ENCODE measurements at regions of chr2 and their contacts with region 1.

Region 1: GRCh38 chr2:98731041-98731893 is at the start of gene MGAT4A:
- DNase-seq: peak; percentile 81
- H3K4me3 Mint-ChIP-seq: peak within 1 kb of the TSS; percentile 86
- H3K27ac Mint-ChIP-seq: peak within 1 kb of the TSS; percentile 86
- H3K4me1 Mint-ChIP-seq: peaks cover 71% of the 10 kb centered on the region
- H3K27me3 Mint-ChIP-seq: no peaks in the 10 kb centered on the region
- total RNA-seq, gene MGAT4A: 69.8 to 80.6 TPM

Region 2: GRCh38 chr2:98324181-98324580 is 407.1 kb before region 1 on chr2:
- CTCF ChIA-PET with region 1: no interaction called
- POLR2A ChIA-PET with region 1: no interaction called
- DNase-seq: no peak
- H3K4me3 Mint-ChIP-seq: no peak overlapping the region
- H3K27ac Mint-ChIP-seq: no peak overlapping the region
- H3K4me1 Mint-ChIP-seq: no peaks in the 10 kb centered on the region
- H3K27me3 Mint-ChIP-seq: peaks cover 17% of the 10 kb centered on the region

Region 3: GRCh38 chr2:98479959-98480524 is 251.2 kb before region 1 on chr2:
- CTCF ChIA-PET with region 1: no interaction called
- POLR2A ChIA-PET with region 1: no interaction called
- DNase-seq: peak; percentile 56
- H3K4me3 Mint-ChIP-seq: peak overlapping the region; percentile 18
- H3K27ac Mint-ChIP-seq: peak overlapping the region; percentile 95
- H3K4me1 Mint-ChIP-seq: peaks cover 100% of the 10 kb centered on the region
- H3K27me3 Mint-ChIP-seq: no peaks in the 10 kb centered on the region

Region 4: GRCh38 chr2:98586551-98587140 is 144.6 kb before region 1 on chr2:
- CTCF ChIA-PET with region 1: no interaction called
- POLR2A ChIA-PET with region 1: no interaction called
- DNase-seq: peak; percentile 6
- H3K4me3 Mint-ChIP-seq: no peak overlapping the region
- H3K27ac Mint-ChIP-seq: no peak overlapping the region
- H3K4me1 Mint-ChIP-seq: peaks cover 1% of the 10 kb centered on the region
- H3K27me3 Mint-ChIP-seq: no peaks in the 10 kb centered on the region

Region 5: GRCh38 chr2:98649135-98649991 is 81.9 kb before region 1 on chr2:
- CTCF ChIA-PET with region 1: interaction called, 17 read pairs
- POLR2A ChIA-PET with region 1: interaction called, 195 read pairs
- DNase-seq: peak; percentile 86
- H3K4me3 Mint-ChIP-seq: no peak overlapping the region
- H3K27ac Mint-ChIP-seq: peak overlapping the region; percentile 36
- H3K4me1 Mint-ChIP-seq: peaks cover 50% of the 10 kb centered on the region
- H3K27me3 Mint-ChIP-seq: no peaks in the 10 kb centered on the region

Region 6: DNA sequence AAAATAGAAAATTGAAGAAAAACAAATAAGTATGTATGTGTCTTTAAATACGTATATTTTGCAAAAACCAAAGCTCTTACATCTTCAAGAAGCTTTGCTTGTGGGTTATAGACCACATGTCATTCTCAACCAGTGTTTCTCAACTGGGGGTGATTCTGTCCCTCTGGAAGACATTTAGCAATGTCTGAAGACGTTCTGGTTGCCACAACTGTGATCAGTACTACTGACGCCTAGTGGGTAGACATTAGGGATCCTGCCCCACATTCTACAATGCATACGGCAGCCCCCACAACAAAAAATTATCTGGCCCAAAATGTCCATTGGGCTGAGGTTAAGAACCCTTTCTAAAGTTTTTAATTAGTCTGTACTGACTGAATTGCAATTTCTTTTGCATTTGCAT is 74.5 kb before region 1 on chr2:
- CTCF ChIA-PET with region 1: interaction called, 15 read pairs
- POLR2A ChIA-PET with region 1: interaction called, 195 read pairs
- DNase-seq: no peak
- H3K4me3 Mint-ChIP-seq: no peak overlapping the region
- H3K27ac Mint-ChIP-seq: peak overlapping the region; percentile 76
- H3K4me1 Mint-ChIP-seq: peaks cover 81% of the 10 kb centered on the region
- H3K27me3 Mint-ChIP-seq: no peaks in the 10 kb centered on the region

Region 7: DNA sequence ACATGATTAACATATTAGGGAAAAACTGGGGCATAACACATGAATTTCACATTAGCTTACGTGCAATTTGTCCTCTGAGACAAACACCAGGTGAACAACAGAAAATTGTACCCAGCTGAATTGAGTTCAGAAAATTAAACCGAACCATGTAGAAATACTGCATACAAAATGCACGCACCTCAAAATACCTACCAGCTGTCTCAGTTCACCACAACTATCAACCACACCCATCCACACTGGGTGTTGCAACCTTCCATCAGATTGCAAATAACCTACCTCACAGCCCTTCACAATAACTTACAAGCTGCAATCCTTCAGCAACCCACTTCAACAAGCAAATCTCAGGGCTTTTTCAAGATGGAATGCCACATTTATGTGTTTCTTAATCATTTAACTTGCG is 66.9 kb before region 1 on chr2:
- CTCF ChIA-PET with region 1: interaction called, 15 read pairs
- POLR2A ChIA-PET with region 1: interaction called, 195 read pairs
- DNase-seq: peak; percentile 79
- H3K4me3 Mint-ChIP-seq: peak overlapping the region; percentile 58
- H3K27ac Mint-ChIP-seq: peak overlapping the region; percentile 99
- H3K4me1 Mint-ChIP-seq: peaks cover 66% of the 10 kb centered on the region
- H3K27me3 Mint-ChIP-seq: no peaks in the 10 kb centered on the region

Region 8: GRCh38 chr2:98702127-98702802 is 29.0 kb before region 1 on chr2:
- CTCF ChIA-PET with region 1: no interaction called
- POLR2A ChIA-PET with region 1: no interaction called
- DNase-seq: no peak
- H3K4me3 Mint-ChIP-seq: no peak overlapping the region
- H3K27ac Mint-ChIP-seq: no peak overlapping the region
- H3K4me1 Mint-ChIP-seq: peaks cover 32% of the 10 kb centered on the region
- H3K27me3 Mint-ChIP-seq: no peaks in the 10 kb centered on the region

Region 9: GRCh38 chr2:98717621-98718020 is 13.6 kb before region 1 on chr2:
- CTCF ChIA-PET with region 1: interaction called, 3 read pairs
- POLR2A ChIA-PET with region 1: interaction called, 37 read pairs
- DNase-seq: no peak
- H3K4me3 Mint-ChIP-seq: no peak overlapping the region
- H3K27ac Mint-ChIP-seq: no peak overlapping the region
- H3K4me1 Mint-ChIP-seq: peaks cover 61% of the 10 kb centered on the region
- H3K27me3 Mint-ChIP-seq: no peaks in the 10 kb centered on the region

Region 10: DNA sequence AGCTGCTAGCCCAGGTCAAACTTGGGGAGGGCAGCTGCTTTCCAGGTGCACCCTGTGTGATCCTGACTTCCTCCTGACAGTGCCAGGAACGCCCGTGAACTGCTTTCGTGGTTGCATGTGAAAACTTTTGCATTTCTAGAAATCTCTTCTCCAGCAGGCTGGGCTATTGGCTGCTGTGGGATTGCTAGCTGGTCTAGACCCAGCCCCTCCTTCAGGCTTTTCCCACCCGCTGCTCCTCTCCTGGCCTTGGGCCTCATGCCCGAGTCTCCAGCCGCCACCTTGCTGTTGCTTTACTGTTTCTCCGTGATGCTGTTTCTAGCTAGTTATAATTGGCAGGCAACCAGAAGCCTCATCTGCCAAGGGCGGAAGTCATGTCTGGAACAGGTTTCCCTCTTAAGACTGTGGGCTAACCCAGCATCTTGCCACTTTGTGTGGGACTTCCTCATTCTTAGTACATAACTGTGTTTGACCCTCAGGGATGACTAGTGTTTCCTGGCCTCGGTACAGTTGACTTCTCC is 26.7 kb after region 1 on chr2:
- CTCF ChIA-PET with region 1: interaction called, 7 read pairs
- POLR2A ChIA-PET with region 1: interaction called, 48 read pairs
- DNase-seq: peak; percentile 67
- H3K4me3 Mint-ChIP-seq: peak overlapping the region; percentile 55
- H3K27ac Mint-ChIP-seq: peak overlapping the region; percentile 82
- H3K4me1 Mint-ChIP-seq: peaks cover 58% of the 10 kb centered on the region
- H3K27me3 Mint-ChIP-seq: no peaks in the 10 kb centered on the region

Measured in activated CD4-positive, alpha-beta memory T cell treated with anti-CD3 and anti-CD28 coated beads, Interleukin-2, amount 10 ng/mL, durations not matched to agents 7 days and 5 days (primary cell).